ENCODE measurements at regions of chr17 and their contacts with region 1.

Region 1: DNA sequence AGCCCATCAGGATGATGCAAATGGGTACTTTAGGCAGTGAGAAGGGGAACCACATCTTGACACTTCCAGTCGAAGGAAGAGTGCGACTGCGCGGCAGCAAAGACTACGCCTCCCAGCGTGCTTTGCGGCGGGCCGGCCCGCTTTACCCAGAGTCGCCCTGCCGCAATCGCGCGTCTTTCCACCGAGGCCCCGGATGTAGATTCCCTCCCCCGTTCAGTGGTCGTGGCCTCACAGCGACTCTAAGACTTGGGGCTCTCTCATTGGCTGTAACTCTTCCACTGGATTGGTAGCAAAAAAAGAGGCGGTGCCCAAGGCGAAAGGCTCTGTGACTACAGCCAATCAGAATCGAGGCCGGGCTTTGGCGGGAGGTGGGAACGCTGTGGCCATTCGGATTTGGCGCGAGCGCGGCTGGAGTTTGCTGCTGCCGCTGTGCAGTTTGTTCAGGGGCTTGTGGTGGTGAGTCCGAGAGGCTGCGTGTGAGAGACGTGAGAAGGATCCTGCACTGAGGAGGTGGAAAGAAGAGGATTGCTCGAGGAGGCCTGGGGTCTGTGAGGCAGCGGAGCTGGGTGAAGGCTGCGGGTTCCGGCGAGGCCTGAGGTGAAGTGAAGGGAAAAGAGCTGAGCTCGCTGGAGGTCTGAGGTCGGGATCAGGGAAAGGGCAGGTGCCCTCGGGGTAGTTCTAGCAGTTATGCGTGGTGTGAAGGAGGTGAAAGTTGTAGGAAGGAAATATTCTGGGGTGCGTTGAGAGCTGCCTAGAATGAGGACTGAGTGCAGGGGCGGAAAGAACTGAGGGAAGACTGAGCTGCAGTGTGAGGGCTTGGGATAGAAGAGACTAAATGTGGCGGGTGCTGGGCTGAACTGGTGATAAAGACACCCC is at the start of gene CDC6:
- DNase-seq: peak; percentile 98 to 99 (median 99)
- H3K4me3 ChIP-seq: peak within 1 kb of the TSS; percentile 41 to 91 (median 66)
- H3K27ac ChIP-seq: peak within 1 kb of the TSS in 49 of 59 donors; percentile 3 to 83 (median 66)
- H3K27me3 ChIP-seq: no peaks in the 10 kb centered on the region
- CTCF ChIP-seq: peak in 42 of 56 donors; percentile 10 to 69 (median 38)
- total RNA-seq, gene CDC6: 1.0 to 12.6 (median 6.7) TPM

Region 2: DNA sequence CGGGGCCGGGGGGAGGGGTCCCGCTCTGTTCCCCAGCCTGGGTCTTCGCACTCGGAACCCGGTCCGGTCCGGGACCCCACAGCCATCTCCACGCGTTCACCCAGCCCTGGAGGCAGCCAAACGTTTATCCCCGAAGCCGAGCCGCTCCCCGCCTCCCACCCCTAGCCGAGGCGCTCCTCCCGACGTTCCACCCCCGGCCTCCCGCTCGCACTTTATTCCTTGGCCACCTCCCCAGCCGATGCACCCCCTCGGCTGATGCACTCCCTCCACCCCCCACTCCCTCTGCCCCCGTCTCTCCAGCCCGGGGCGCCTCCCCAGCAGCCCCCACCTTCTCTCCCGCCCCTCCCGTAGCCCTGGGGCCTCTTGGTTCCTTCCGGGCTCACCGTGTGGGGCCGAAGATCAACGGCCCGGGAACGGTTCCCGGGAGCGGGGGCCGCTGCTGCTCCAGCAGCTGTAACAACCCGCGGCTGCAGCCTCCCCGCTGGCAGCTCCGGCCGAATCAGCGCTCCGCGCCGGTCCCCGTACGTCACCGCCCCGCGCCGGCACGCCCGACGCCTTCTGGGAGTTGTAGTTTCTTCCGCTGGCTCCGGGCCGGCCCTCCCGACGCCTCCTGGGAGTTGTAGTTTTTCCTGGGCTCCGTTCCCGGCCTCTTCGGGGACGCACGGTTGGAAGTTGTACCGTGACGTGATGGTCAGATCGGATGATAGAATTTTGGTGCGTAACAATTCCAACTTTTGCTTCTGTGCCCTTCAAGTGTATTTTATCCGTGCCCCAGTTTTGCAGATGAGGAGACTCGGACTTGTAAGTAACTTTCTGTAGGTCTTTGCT is 360.4 kb before region 1 on chr17 and contains the starts of genes LRRC3C and ORMDL3:
- intact Hi-C with region 1: loop called (anchors 5 to 10 kb)
- DNase-seq: peak; percentile 86 to 96 (median 92)
- H3K4me3 ChIP-seq: peak within 1 kb of the TSS; percentile 51 to 95 (median 82)
- H3K27ac ChIP-seq: peak within 1 kb of the TSS; percentile 25 to 92 (median 81)
- H3K27me3 ChIP-seq: no peaks in the 10 kb centered on the region
- CTCF ChIP-seq: peak in 27 of 56 donors; percentile 7 to 57 (median 28)
- total RNA-seq, gene LRRC3C: 0.47 to 1.00 (median 0.60) TPM in 6 of 120 experiments, not detected in the others
- total RNA-seq, gene ORMDL3: 42.7 to 90.1 (median 58.8) TPM

Region 3: DNA sequence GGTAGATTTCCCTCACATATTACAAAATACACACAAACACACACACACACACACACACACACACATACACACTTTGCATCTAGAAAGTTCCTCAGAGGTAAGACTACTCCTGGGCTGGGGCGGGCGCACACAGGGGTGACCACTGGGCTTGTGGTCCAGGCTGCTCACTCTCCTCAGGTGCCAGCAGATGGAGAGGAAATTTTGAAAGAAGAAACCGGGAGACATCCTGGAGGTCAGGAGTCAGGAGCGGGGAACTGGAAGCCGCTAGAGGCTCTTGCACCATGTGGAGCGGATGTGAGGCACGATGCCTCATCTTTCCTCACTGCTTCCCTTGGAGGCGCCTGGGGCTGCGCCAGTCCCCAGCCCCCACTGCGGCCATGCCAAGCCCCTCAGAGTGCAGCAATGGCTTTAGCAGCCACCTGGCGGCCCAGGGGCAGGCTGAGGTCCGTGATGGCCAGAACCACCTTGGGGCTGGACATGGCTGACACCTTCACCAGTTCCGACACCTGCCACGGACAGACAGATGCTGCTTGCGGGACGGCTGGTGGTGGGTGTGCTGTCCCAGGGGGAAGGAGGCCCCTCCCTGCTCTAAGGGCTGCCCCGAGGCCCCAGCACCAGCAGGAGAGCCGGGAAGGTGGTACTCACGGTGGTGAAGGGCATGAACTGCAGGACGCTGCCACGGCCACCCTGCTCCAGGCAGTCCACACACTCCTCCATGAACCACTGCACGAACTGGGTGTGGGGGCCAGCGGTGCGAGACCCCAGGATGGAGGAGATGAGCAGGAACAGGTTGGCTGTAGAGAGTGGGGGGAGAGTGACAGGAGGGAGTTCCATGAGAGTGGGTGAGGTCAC is 268.4 kb before region 1 on chr17:
- intact Hi-C with region 1: loop called in 1 of 2 experiments (anchors 10 kb)
- DNase-seq: no peak
- H3K4me3 ChIP-seq: no peak overlapping the region
- H3K27ac ChIP-seq: no peak overlapping the region
- H3K27me3 ChIP-seq: no peaks in the 10 kb centered on the region
- CTCF ChIP-seq: no peak

Region 4: GRCh38 chr17:40203131-40203530 is 84.6 kb before region 1 on chr17:
- intact Hi-C with region 1: loop called in 1 of 2 experiments (anchors 5 kb)
- DNase-seq: no peak
- H3K4me3 ChIP-seq: no peak overlapping the region
- H3K27ac ChIP-seq: no peak overlapping the region
- H3K27me3 ChIP-seq: no peaks in the 10 kb centered on the region
- CTCF ChIP-seq: no peak

Region 5: GRCh38 chr17:40417609-40418427 is 130.1 kb after region 1 on chr17 and contains the start of gene TOP2A:
- intact Hi-C with region 1: loop called in 1 of 2 experiments (anchors 5 kb)
- DNase-seq: peak; percentile 81 to 99 (median 96)
- H3K4me3 ChIP-seq: peak within 1 kb of the TSS; percentile 40 to 88 (median 68)
- H3K27ac ChIP-seq: peak within 1 kb of the TSS in 18 of 59 donors; percentile 25 to 80 (median 50)
- H3K27me3 ChIP-seq: peaks cover 0 to 18% (median 7%) of the 10 kb centered on the region in 45 donors
- CTCF ChIP-seq: peak in 11 of 56 donors; percentile 8 to 42 (median 20)
- total RNA-seq, gene TOP2A: 0.04 to 3.1 (median 0.42) TPM in 55 of 120 experiments, not detected in the others